Endothelial cell of umbilical vein (primary cell): ENCODE measurements at regions of chr7 and their contacts with region 1.

Region 1: GRCh38 chr7:150903606-150904005 is 51.3 kb downstream of the AOC1 start:
- DNase-seq: peak; percentile 86
- H3K4me3 ChIP-seq: no peak overlapping the region
- H3K27ac ChIP-seq: no peak overlapping the region
- H3K4me1 ChIP-seq: peaks cover 10% of the 10 kb centered on the region
- H3K27me3 ChIP-seq: peaks cover 0 to 4% of the 10 kb centered on the region in 2 experiments
- CTCF ChIP-seq: no peak
- POLR2A ChIP-seq: no peak

Region 2: DNA sequence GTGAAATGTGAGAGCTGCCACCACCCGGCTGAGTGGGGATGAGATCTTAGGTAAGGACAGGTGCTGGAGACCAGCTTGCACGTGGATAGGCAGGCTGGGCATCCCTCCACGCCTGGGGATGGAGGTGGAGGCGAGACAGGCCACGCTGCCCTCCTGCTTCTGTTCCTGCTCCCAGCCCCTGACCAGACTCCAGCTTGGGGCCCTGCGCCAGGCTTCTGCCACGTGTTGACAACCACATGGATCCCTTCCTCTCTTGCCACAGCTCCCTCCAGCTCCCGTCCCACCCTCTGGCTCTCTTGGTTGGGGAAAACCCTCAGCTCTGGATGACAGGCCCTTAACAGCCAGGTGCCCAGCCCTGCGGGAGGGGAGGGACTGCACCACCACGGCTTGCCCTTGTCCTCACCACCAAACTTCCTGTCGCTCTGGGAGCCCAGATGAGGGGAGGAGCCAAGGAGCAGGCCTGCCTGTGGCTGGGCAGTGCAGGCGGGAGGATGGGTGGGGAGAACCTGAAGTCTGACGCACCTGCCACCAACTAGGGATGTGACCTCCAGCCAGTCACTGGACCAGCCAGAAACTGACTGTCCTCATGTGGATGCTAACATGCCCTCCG is 38.5 kb after region 1 on chr7:
- CTCF ChIA-PET with region 1: interaction called, 4 read pairs
- POLR2A ChIA-PET with region 1: no interaction called
- dilution Hi-C with region 1: no loop called
- intact Hi-C with region 1: loop called (anchors 5 kb)
- DNase-seq: no peak
- H3K4me3 ChIP-seq: no peak overlapping the region
- H3K27ac ChIP-seq: no peak overlapping the region
- H3K4me1 ChIP-seq: no peaks in the 10 kb centered on the region
- H3K27me3 ChIP-seq: peaks cover under 1 to 8% of the 10 kb centered on the region in 2 experiments
- CTCF ChIP-seq: no peak
- POLR2A ChIP-seq: no peak